Activated T-helper 2 cell treated with anti-CD3 and anti-CD28 coated beads, Interferon-gamma antibody, Interleukin-2, Interleukin-4, amounts not matched to agents 10 μg/mL and 5 μg/mL and 100 μg/mL, durations not matched to agents 14 hours and 24 hours and 36 hours (primary cell): ENCODE measurements at regions of chr6 and their contacts with region 1.

Region 1: DNA sequence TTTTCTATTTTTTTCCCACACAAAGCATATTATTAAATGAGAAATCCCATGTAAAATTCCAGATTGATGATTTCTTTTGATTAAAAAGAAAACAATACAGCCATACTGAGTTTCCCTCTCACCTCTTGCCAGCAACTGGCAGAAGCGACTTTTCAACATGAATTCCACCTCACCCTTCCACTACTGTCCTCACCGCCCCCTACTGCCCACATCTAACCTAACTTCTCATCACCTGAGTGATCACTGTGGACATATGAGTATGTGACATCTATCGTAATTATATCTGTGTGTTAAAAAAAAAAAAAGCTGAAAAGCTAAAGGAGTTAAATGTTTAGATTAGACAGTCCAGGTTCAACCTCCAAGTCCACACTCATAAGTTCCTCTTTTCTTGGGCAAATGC is 528.6 kb downstream of the PRKN start:
- DNase-seq: no peak
- H3K4me3 Mint-ChIP-seq: no peak overlapping the region
- H3K27ac Mint-ChIP-seq: no peak overlapping the region
- H3K4me1 Mint-ChIP-seq: no peaks in the 10 kb centered on the region
- H3K27me3 Mint-ChIP-seq: no peaks in the 10 kb centered on the region

Region 2: DNA sequence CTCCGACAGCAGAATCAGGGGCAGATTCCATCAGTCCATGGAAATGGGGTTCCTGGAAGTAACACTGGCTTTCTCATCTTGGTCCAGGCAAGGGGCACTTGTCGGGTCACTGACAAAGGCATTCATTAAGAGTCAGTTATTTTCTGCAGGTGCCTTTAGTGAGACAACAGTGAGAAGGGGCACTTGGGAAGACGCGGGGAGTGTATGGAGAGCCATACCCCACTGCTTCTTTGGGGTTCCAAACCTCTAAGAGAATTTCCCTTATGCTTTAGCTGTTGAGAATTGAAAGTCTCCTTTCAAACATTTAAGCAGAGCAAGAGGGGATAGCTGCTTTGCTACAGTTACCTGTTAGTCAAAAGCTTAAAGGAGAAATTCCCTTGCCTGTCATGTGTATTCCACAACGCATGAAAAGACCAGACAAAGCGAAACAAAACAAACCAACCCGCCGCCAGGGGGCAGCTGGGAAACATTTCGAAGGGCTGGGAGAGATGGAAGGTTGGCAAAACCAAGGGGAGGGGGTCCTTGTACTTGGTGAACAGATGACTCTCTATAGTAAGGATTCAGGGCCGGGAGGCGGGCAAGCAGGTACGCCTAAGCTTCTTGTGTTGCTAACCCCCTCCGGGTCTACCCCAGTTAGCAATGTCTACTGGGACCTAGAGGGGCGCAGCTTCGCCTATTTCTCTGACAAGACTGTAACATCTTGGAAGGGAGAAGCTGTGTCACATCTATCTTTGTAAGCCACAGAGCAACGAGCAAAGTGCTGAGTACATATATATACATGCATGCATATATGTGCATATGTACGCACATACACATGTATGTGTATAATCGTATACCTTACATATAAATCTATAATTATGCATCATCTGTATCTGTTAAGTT is 450.1 kb before region 1 on chr6:
- intact Hi-C with region 1: loop called (anchors 2 kb)
- DNase-seq: no peak
- H3K4me3 Mint-ChIP-seq: no peak overlapping the region
- H3K27ac Mint-ChIP-seq: no peak overlapping the region
- H3K4me1 Mint-ChIP-seq: no peaks in the 10 kb centered on the region
- H3K27me3 Mint-ChIP-seq: no peaks in the 10 kb centered on the region

Region 3: DNA sequence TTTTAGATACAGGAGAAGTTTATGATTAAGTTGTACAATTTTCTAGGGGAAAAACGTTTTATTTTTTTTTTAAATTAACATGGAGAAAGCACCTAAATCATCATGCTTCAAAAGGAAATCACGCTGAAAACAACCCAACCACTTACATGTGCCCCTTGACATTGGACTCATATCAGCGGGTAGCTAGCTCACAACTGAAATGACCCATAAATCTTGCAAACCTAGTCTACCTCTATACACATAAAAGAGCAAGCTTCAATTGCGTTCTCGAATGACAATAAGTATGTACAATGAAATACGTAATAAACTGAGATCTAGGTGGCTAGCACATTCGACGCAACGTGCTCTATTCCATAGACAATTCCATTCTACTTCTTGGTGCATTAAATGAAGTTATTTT is 202.1 kb before region 1 on chr6:
- intact Hi-C with region 1: no loop called
- DNase-seq: no peak
- H3K4me3 Mint-ChIP-seq: no peak overlapping the region
- H3K27ac Mint-ChIP-seq: no peak overlapping the region
- H3K4me1 Mint-ChIP-seq: no peaks in the 10 kb centered on the region
- H3K27me3 Mint-ChIP-seq: no peaks in the 10 kb centered on the region

Region 4: GRCh38 chr6:162177746-162178145 is 21.2 kb before region 1 on chr6:
- intact Hi-C with region 1: no loop called
- DNase-seq: no peak
- H3K4me3 Mint-ChIP-seq: no peak overlapping the region
- H3K27ac Mint-ChIP-seq: no peak overlapping the region
- H3K4me1 Mint-ChIP-seq: peaks cover 19% of the 10 kb centered on the region
- H3K27me3 Mint-ChIP-seq: no peaks in the 10 kb centered on the region